ENCODE measurements at regions of chr15 and their contacts with region 1.

Region 1: DNA sequence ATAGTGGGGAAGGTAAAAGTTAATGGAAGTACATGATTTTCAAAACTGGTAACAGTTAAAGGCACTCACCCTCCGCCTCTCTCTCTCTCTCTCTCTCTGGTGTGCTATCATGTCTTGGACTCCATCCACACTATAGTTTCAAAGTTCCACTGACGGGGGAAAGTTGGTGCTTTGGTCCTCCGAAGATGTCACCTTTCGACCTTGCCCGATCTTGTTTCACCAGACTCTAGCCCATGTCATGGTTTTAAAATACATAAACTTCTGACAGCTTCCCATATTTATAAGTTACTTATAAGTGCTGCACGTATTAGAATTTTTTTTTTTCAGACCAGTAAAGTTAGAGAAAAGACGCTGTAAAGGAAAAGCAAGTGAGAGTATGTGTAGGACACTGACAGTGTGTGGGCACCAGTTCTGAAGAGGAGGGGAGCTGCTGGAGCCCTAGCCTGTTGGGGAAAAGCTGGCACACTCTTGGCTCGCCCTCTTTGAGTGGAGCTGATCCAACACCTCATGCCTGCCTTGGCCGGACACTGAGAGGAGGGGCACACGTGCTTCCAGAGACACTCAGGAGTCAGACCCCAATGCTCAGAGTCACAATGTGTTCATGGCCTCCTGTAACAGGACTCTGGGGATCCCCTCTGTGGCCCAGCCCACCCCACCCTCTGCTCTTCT is 200.5 kb upstream of the TPM1 start:
- DNase-seq: no peak
- ATAC-seq: peak; percentile 78

Region 2: GRCh38 chr15:62782039-62782791 is 59.8 kb before region 1 on chr15:
- intact Hi-C with region 1: loop called (anchors 2 kb)
- DNase-seq: peak; percentile 80
- ATAC-seq: peak; percentile 92

Region 3: GRCh38 chr15:62857411-62857853 is 15.4 kb after region 1 on chr15:
- intact Hi-C with region 1: no loop called
- DNase-seq: no peak
- ATAC-seq: no peak

Region 4: GRCh38 chr15:62896978-62897647 is 55.1 kb after region 1 on chr15:
- intact Hi-C with region 1: no loop called
- DNase-seq: peak; percentile 88
- ATAC-seq: peak; percentile 77

Region 5: GRCh38 chr15:63013052-63013808 is 171.2 kb after region 1 on chr15:
- intact Hi-C with region 1: no loop called
- DNase-seq: no peak
- ATAC-seq: peak; percentile 27

Region 6: GRCh38 chr15:63093486-63094205 is 251.6 kb after region 1 on chr15:
- intact Hi-C with region 1: no loop called
- DNase-seq: peak; percentile 77
- ATAC-seq: peak; percentile 94

Measured in Right ventricle myocardium inferior (tissue), 1 donor.